ENCODE measurements at regions of chr15 and their contacts with region 1.

Region 1: GRCh38 chr15:81410318-81410753 is 36.3 kb upstream of the TMC3 start:
- DNase-seq: peak; percentile 74
- ATAC-seq: peak; percentile 80
- H3K4me3 ChIP-seq: no peak overlapping the region
- H3K27ac ChIP-seq: no peak overlapping the region
- H3K4me1 ChIP-seq: no peaks in the 10 kb centered on the region
- H3K27me3 ChIP-seq: peaks cover 14% of the 10 kb centered on the region
- CTCF ChIP-seq: peak; percentile 68
- POLR2A ChIP-seq: no peak
- RAD21 ChIP-seq: peak; percentile 81

Region 2: DNA sequence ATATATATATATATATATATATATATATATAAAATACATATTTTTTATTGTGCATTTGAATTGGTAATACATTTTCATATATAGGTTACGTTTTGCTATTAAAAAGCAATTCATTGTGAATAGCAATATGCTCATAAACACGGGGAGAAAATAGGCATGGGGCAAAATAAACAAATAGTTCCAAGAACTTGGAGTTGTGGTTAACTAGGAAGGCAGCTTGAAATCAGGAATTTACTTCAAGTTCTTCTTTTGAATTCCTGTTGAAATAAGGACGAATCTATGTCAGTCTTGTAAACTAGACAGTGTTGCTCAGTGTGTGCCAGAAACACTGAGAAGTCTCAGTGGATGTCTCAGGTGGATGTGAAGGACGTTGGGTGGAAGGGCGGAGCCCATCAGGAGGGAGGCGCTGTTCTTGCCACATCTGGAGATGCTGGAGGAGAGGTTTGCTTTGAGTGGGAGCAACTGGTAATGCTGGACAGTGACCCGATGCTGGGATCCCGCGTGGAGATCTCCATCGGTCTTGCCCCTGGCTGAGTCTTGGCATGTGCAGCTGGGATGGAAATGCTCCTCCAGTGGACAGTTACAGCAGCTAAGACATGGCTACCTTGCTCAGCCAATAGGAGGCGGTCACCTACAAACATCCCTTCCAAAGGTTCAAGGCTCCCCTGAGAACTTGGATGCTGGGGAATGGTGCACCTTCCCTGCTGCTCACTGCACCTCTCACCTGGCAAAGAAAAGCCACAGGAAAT is 211.1 kb before region 1 on chr15:
- CTCF ChIA-PET with region 1: no interaction called
- POLR2A ChIA-PET with region 1: no interaction called
- dilution Hi-C with region 1: no loop called
- in situ Hi-C with region 1: no loop called
- intact Hi-C with region 1: no loop called
- DNase-seq: no peak
- ATAC-seq: no peak
- H3K4me3 ChIP-seq: no peak overlapping the region
- H3K27ac ChIP-seq: no peak overlapping the region
- H3K4me1 ChIP-seq: peaks cover 5% of the 10 kb centered on the region; the same call in 1 of the 2 replicates
- H3K27me3 ChIP-seq: no peaks in the 10 kb centered on the region
- CTCF ChIP-seq: no peak
- POLR2A ChIP-seq: no peak
- RAD21 ChIP-seq: no peak

Region 3: GRCh38 chr15:81504170-81504905 is 94.0 kb after region 1 on chr15:
- CTCF ChIA-PET with region 1: no interaction called
- POLR2A ChIA-PET with region 1: no interaction called
- dilution Hi-C with region 1: no loop called
- in situ Hi-C with region 1: no loop called
- intact Hi-C with region 1: no loop called
- DNase-seq: peak; percentile 87
- ATAC-seq: peak; percentile 51; the same call in 1 of the 2 replicates
- H3K4me3 ChIP-seq: no peak overlapping the region
- H3K27ac ChIP-seq: no peak overlapping the region
- H3K4me1 ChIP-seq: peaks cover 7% of the 10 kb centered on the region
- H3K27me3 ChIP-seq: no peaks in the 10 kb centered on the region
- CTCF ChIP-seq: no peak
- POLR2A ChIP-seq: no peak
- RAD21 ChIP-seq: no peak

Region 4: DNA sequence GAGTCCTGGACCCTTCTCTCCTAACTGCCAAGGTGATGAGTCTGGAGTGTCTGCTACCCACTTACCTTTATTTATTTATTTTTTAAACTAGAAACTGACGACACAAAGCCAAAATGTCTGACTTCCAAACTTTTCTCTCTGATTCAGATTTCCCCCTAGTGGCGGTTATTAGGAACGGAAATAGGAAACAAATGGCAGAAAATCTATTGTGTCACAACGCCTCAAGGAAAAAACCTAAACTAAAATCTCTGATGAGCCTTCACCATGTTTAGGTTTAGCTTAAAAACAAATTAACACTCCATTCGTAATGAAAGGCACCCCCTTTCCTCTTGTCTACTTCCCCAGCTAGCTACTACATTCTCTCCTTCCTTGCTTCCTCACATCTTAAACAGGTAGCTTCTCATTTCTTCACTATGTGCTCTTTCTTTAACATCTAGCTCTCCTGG is 729.5 kb after region 1 on chr15:
- CTCF ChIA-PET with region 1: no interaction called
- POLR2A ChIA-PET with region 1: no interaction called
- dilution Hi-C with region 1: no loop called
- in situ Hi-C with region 1: no loop called
- intact Hi-C with region 1: loop called (anchors 5 kb)
- DNase-seq: peak; percentile 70
- ATAC-seq: peak; percentile 71
- H3K4me3 ChIP-seq: no peak overlapping the region
- H3K27ac ChIP-seq: no peak overlapping the region
- H3K4me1 ChIP-seq: peaks cover 11% of the 10 kb centered on the region
- H3K27me3 ChIP-seq: no peaks in the 10 kb centered on the region
- CTCF ChIP-seq: peak; percentile 77
- POLR2A ChIP-seq: no peak
- RAD21 ChIP-seq: peak; percentile 65